Activated CD4-positive, alpha-beta memory T cell treated with anti-CD3 and anti-CD28 coated beads, Interleukin-2, amount 10 ng/mL, durations not matched to agents 7 days and 5 days (primary cell): ENCODE measurements at regions of chr6 and their contacts with region 1.

Region 1: GRCh38 chr6:31619805-31620585 is 520 bp upstream of the PRRC2A start:
- DNase-seq: peak; percentile 98
- H3K4me3 Mint-ChIP-seq: peak overlapping the region; percentile 81
- H3K27ac Mint-ChIP-seq: peak overlapping the region; percentile 95
- H3K4me1 Mint-ChIP-seq: peaks cover 50% of the 10 kb centered on the region
- H3K27me3 Mint-ChIP-seq: no peaks in the 10 kb centered on the region

Region 2: GRCh38 chr6:31575335-31575901 is 44.6 kb before region 1 on chr6 and contains the start of gene TNF:
- CTCF ChIA-PET with region 1: no interaction called
- POLR2A ChIA-PET with region 1: interaction called, 21 read pairs
- DNase-seq: peak; percentile 91
- H3K4me3 Mint-ChIP-seq: peak within 1 kb of the TSS; percentile 94
- H3K27ac Mint-ChIP-seq: peak within 1 kb of the TSS; percentile 96
- H3K4me1 Mint-ChIP-seq: peaks cover 73% of the 10 kb centered on the region
- H3K27me3 Mint-ChIP-seq: peaks cover 2% of the 10 kb centered on the region
- total RNA-seq, gene TNF: 124 to 130 TPM

Region 3: DNA sequence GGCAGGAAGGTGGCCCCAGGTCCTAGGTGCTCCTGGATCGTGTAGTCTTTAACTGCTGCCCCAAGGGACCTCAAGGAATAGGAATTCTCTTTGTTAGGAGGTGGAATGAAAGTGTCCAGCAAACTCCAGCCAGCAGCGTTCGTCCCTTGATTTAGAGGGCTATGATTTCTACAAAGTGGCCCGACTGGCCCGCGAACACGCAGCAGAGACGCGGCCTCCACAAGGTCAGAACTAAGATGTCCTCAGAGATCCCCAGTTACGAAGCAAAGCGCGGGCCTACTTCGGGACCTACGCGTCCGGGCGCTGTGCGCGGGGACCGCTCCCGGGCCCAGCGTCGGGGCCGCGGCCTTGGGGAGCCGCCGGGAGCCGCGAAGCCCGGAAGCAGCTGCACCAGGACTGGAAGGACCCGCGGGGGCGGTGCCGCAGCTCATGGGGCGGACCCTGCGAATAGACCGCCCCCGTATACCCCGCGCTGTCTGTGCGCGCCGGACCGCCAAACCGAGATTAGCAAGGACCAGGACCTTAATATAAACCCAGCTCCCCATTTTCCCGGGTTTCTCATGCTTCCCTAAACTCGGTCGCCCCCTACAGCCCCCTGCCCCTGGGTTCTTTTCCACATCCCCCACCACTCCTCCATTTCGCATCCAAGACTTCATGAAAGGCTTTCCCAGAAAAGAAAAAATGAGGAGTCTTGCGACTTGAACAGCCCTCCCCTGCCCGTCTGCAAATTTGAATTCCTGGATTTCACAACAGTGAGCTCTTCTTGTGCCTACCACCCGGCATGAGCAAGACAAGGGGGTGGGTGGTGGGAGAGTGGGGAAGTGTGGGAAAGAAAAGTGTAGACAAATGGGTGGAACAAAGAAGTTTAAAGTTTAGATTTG is 40.6 kb after region 1 on chr6 and contains the start of gene C6orf47:
- CTCF ChIA-PET with region 1: no interaction called
- POLR2A ChIA-PET with region 1: interaction called, 37 read pairs
- DNase-seq: peak; percentile 82
- H3K4me3 Mint-ChIP-seq: peak within 1 kb of the TSS; percentile 95
- H3K27ac Mint-ChIP-seq: peak within 1 kb of the TSS; percentile 95
- H3K4me1 Mint-ChIP-seq: peaks cover 83% of the 10 kb centered on the region
- H3K27me3 Mint-ChIP-seq: no peaks in the 10 kb centered on the region
- total RNA-seq, gene C6orf47: 26.4 to 26.7 TPM